ENCODE measurements at regions of chr4 and their contacts with region 1.

Region 1: DNA sequence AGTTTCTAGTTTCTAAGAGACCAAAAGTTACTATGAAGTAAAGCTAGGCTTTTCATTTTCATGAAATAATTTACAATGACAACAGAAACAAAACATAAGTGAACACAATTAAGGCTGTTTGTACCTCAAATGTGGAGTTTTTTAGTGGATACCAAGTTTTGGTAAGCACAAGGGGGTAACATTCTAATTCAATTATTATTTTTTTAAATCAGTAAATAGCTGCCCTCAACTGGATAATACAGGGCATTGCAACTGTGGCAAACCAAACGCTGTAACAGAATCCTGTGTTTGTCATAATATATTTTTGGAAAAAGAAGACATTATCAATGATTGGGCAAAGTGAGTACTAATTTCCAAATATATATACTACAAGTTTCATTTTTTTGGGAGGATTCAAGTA is 150.3 kb downstream of the FBXW7 start:
- DNase-seq: peak; percentile 47
- ATAC-seq: 0 out of 2 replicates have a peak, but pooled peaks have one; percentile 33
- H3K4me3 ChIP-seq: no peak overlapping the region
- H3K27ac ChIP-seq: no peak overlapping the region
- H3K4me1 ChIP-seq: no peaks in the 10 kb centered on the region
- H3K27me3 ChIP-seq: no peaks in the 10 kb centered on the region
- CTCF ChIP-seq: peak; percentile 70

Region 2: DNA sequence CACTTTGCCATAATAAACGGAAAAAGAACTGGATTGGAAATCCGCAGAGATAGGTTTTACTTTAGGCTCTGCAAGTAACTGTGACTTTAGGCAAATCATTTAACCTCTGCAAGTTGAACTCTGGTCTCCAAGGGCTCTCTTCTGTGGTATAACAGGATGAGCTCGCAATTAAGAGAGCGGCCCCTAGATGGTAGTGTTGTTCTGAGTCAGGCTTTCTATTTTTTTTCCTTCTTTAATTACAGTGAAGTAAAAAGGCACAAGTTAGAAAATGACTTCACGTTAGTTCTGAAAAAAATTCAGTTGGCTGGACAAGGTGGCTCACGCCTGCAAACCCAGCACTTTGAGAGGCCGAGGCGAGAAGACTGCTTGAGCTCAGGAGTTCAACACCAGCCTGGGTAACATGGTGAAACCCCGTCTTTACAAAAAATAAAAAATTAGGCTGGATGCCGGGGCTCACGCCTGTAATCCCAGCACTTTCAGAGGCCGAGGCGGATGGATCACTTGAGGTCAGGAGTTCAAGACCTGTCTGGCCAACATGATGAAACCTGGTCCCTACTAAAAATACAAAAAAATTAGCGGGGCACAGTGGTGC is 1268.1 kb before region 1 on chr4:
- CTCF ChIA-PET with region 1: no interaction called
- POLR2A ChIA-PET with region 1: no interaction called
- intact Hi-C with region 1: loop called (anchors 10 kb)
- DNase-seq: peak; percentile 72
- ATAC-seq: peak; percentile 67
- H3K4me3 ChIP-seq: no peak overlapping the region
- H3K27ac ChIP-seq: no peak overlapping the region
- H3K4me1 ChIP-seq: no peaks in the 10 kb centered on the region
- H3K27me3 ChIP-seq: no peaks in the 10 kb centered on the region
- CTCF ChIP-seq: peak; percentile 76

Region 3: GRCh38 chr4:151760712-151761527 is 624.6 kb before region 1 on chr4 and contains the start of gene GATB:
- CTCF ChIA-PET with region 1: no interaction called
- POLR2A ChIA-PET with region 1: no interaction called
- intact Hi-C with region 1: loop called (anchors 10 kb)
- DNase-seq: peak; percentile 94
- ATAC-seq: peak; percentile 99
- H3K4me3 ChIP-seq: peak within 1 kb of the TSS; percentile 96
- H3K27ac ChIP-seq: peak within 1 kb of the TSS; percentile 34; the same call in 1 of the 2 replicates
- H3K4me1 ChIP-seq: peaks cover 3% of the 10 kb centered on the region; the same call in 1 of the 2 replicates
- H3K27me3 ChIP-seq: no peaks in the 10 kb centered on the region
- CTCF ChIP-seq: peak; percentile 44
- total RNA-seq, gene GATB: 20.4 and 22.7 TPM in 2 replicates

Region 4: DNA sequence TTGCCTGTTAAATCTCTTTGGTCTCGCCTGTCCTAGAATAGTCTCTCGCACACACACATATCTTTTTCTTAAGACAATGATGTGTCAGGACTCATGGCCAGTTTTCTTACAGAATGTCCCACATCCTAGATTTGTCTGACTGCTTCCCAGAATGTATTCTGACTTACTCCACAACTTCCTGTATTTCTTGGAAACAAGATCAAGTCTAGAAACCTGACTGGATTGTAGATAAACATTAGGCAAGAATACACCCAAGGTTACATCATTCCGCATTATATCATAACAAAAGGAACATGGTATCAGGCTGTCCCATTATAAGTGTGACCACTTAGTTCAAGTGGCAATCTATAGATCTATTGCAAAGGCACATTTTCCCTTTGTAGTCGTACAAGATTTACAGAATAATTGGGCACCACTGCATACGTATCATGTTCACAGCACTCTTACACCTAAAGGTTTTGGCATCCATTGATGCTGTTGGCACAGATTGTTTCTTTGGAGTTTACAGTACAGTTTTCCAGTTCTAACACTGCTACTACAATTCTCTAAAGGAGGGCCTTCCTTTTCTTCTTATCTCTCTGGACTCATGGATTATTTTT is 94.0 kb after region 1 on chr4:
- CTCF ChIA-PET with region 1: no interaction called
- POLR2A ChIA-PET with region 1: no interaction called
- intact Hi-C with region 1: no loop called
- DNase-seq: no peak
- ATAC-seq: no peak
- H3K4me3 ChIP-seq: no peak overlapping the region
- H3K27ac ChIP-seq: no peak overlapping the region
- H3K4me1 ChIP-seq: peaks cover 18% of the 10 kb centered on the region
- H3K27me3 ChIP-seq: no peaks in the 10 kb centered on the region
- CTCF ChIP-seq: no peak

Region 5: DNA sequence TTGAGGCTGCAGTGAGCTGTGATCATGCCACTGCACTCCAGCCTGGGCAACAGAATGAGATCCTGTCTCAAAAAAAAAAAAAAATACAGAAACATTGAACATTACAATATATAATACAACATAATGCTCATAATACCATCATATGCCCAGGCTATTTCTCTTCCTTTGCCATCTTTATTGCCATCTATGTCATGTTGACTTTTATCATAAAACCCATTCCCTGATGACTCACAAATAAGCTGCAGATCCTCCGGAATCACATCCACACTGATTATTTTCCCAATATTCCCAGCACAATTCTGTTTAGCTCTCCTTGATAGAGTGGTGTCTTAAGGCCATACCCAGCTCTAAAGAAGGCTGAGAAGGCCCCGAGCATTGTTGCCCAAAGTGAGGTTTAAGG is 159.5 kb after region 1 on chr4:
- CTCF ChIA-PET with region 1: no interaction called
- POLR2A ChIA-PET with region 1: no interaction called
- intact Hi-C with region 1: no loop called
- DNase-seq: peak; percentile 61
- ATAC-seq: peak; percentile 88
- H3K4me3 ChIP-seq: no peak overlapping the region
- H3K27ac ChIP-seq: peak overlapping the region; percentile 82
- H3K4me1 ChIP-seq: peaks cover 10% of the 10 kb centered on the region; the same call in 1 of the 2 replicates
- H3K27me3 ChIP-seq: no peaks in the 10 kb centered on the region
- CTCF ChIP-seq: no peak